Activated naive CD4-positive, alpha-beta T cell treated with anti-CD3 and anti-CD28 coated beads, Interleukin-2, amount 10 ng/mL, durations not matched to agents 7 days and 5 days (primary cell): ENCODE measurements at regions of chr1 and their contacts with region 1.

Region 1: GRCh38 chr1:181088079-181089016 is at the start of gene IER5:
- DNase-seq: peak; percentile 97
- H3K4me3 Mint-ChIP-seq: peak within 1 kb of the TSS; percentile 100
- H3K27ac Mint-ChIP-seq: peak within 1 kb of the TSS; percentile 99
- H3K4me1 Mint-ChIP-seq: peaks cover 52% of the 10 kb centered on the region
- H3K27me3 Mint-ChIP-seq: peaks cover 18% of the 10 kb centered on the region

Region 2: GRCh38 chr1:181105134-181106021 is 17.0 kb after region 1 on chr1:
- CTCF ChIA-PET with region 1: interaction called, 10 read pairs
- DNase-seq: peak; percentile 94
- H3K4me3 Mint-ChIP-seq: peak overlapping the region; percentile 79
- H3K27ac Mint-ChIP-seq: peak overlapping the region; percentile 1
- H3K4me1 Mint-ChIP-seq: peaks cover 70% of the 10 kb centered on the region
- H3K27me3 Mint-ChIP-seq: peaks cover 55% of the 10 kb centered on the region

Region 3: DNA sequence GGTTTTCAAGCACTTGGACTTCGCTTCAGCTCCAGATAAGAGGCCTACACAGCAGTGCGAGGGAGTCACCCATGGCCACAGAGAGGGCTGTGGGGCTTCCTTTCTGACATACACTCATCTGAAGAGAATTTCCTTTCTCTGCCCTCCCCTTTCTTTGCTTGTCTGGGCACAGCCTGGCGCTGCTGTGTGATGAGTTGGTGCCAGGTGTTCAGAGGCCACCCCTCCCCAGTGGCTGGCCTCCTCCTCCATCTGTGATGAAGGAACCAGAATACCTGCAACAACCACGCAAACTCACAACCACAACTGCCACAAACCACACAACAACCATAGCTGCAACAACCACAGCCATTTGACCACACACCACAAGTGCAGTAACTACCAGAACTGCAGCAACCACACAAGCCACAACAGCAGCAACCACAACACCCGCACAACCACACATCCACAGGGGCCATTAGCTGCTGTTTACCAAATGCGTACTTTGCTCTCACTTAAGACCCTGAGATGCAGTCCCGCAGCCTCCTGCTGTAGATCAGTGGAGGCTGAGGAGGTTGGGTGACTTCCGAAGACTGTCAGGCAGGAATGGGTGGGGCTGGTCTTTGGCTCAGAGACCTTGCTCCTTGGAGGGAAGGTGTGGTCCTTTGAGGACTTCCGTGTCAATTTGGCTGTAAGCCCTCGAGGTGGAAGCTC is 71.2 kb after region 1 on chr1:
- CTCF ChIA-PET with region 1: interaction called, 18 read pairs
- DNase-seq: peak; percentile 74
- H3K4me3 Mint-ChIP-seq: peak overlapping the region; percentile 62
- H3K27ac Mint-ChIP-seq: peak overlapping the region; percentile 92
- H3K4me1 Mint-ChIP-seq: peaks cover 40% of the 10 kb centered on the region
- H3K27me3 Mint-ChIP-seq: peaks cover 43% of the 10 kb centered on the region

Region 4: DNA sequence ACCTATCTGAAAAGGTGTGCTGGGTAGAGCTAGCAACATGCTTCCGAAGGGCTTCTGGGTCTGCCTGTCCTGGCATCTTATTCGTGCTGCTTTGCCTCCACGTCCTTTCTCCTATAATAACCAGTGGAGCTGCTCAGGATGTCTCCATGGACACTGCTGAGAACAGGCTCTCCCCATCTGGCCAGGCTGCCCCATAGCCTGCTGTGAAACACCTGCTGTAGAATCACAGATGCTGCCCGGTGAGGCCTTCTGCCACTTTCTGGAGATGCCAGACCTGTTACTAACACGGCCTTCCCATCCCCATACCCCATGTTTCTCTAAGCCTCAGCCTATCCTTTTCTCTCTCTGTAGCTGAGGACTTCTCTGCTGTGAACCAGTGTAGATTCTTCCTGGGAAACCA is 120.6 kb after region 1 on chr1:
- CTCF ChIA-PET with region 1: no interaction called
- DNase-seq: no peak
- H3K4me3 Mint-ChIP-seq: no peak overlapping the region
- H3K27ac Mint-ChIP-seq: no peak overlapping the region
- H3K4me1 Mint-ChIP-seq: no peaks in the 10 kb centered on the region
- H3K27me3 Mint-ChIP-seq: peaks cover 27% of the 10 kb centered on the region

Region 5: GRCh38 chr1:181525104-181525721 is 436.9 kb after region 1 on chr1:
- CTCF ChIA-PET with region 1: no interaction called
- DNase-seq: no peak
- H3K4me3 Mint-ChIP-seq: no peak overlapping the region
- H3K27ac Mint-ChIP-seq: no peak overlapping the region
- H3K4me1 Mint-ChIP-seq: peaks cover 8% of the 10 kb centered on the region
- H3K27me3 Mint-ChIP-seq: peaks cover 36% of the 10 kb centered on the region